ENCODE measurements at regions of chr12 and their contacts with region 1.

Region 1: GRCh38 chr12:52032804-52033502 is 18.3 kb upstream of the NR4A1 start:
- DNase-seq: peak; percentile 99
- ATAC-seq: peak; percentile 95
- H3K4me3 ChIP-seq: peak overlapping the region in 1 of 2 donors; percentile 12
- H3K27ac ChIP-seq: peak overlapping the region; percentile 80 to 89
- H3K4me1 ChIP-seq: peaks cover 0 to 4% of the 10 kb centered on the region in 2 donors
- H3K27me3 ChIP-seq: no peaks in the 10 kb centered on the region

Region 2: DNA sequence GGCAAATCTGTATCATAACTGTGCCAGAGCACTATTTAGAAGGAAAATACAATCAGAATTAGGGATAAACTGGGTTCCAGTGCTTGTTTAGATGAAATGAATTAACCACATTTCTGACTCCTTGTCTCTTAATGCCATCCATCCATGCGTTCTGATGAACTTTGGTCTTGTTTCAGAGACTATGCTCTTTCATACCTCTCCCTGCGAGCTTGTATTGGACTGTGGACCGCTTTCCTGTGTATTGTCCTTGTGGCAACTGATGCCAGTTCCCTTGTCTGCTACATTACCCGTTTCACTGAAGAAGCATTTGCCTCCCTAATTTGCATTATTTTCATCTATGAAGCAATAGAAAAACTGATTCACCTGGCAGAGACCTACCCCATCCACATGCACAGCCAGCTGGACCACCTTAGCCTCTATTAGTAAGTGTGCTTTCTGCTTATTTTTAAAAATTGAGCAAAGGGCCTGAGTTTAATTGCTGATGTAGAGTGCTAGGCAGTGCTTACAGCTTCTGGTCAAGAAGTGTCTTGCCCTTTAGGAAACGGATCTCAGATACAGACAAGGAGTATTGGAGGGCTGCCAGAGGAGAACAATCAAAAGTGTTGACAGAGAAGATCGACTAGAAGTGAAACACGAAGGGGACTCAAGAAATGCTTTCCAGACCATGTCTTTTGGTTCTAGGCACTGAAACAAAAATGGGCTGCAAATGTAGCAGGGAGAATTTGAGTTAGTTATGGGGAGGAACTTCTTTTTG is 561.7 kb before region 1 on chr12:
- intact Hi-C with region 1: no loop called
- DNase-seq: no peak
- ATAC-seq: no peak
- H3K4me3 ChIP-seq: no peak overlapping the region
- H3K27ac ChIP-seq: no peak overlapping the region
- H3K4me1 ChIP-seq: no peaks in the 10 kb centered on the region
- H3K27me3 ChIP-seq: no peaks in the 10 kb centered on the region

Region 3: DNA sequence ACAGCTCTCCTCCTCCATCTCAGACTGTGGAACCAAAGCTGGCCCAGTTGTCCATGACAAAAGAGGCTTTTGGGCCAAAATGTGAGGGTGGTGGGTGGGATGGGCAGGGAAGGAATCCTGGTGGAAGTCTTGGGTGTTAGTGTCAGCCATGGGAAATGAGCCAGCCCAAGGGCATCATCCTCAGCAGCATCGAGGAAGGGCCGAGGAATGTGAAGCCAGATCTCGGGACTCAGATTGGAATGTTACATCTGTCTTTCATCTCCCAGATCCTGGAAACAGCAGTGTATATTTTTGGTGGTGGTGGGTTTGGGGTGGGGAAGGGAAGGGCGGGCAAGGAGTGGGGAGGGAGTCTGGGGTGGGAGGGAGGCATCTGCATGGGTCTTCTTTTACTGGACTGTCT is 38.0 kb before region 1 on chr12:
- intact Hi-C with region 1: no loop called
- DNase-seq: no peak
- ATAC-seq: no peak
- H3K4me3 ChIP-seq: no peak overlapping the region
- H3K27ac ChIP-seq: no peak overlapping the region
- H3K4me1 ChIP-seq: no peaks in the 10 kb centered on the region
- H3K27me3 ChIP-seq: no peaks in the 10 kb centered on the region

Region 4: DNA sequence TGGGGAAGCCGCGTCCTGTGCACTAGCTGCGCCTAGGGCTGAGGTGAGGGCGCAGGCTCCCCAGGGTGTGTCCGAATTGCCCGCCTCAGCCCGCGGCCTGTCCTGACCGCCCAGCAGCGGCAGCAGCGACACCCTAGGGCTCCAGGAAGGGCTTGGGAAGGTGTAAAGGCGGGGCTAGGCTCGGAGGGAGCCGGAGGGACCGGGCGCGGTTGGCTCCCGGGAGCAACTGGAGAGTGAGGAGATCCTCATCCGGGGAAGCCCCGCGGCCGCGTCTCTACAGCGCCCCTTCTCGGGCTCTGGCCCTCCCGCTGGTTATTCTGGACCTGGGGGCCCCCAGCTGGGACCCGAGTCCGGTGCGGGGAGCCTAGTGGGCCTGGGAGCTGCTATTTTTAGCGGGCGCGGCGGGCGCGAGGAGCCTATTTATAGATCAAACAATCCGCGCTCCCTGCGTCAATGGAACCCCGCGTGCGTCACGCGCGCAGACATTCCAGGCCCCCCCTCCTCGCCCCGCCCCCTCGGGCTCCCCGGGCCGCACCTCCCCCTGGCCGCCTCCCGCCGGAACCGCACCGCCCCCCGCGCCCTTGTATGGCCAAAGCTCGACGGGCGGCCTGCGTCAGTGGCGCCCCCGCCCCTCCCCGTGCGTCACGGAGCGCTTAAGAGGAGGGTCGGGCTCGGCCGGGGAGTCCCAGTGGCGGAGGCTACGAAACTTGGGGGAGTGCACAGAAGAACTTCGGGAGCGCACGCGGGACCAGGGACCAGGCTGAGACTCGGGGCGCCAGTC is 18.0 kb after region 1 on chr12 and contains the start of gene NR4A1:
- intact Hi-C with region 1: loop called in 1 of 2 experiments (anchors 2 kb)
- DNase-seq: peak; percentile 99
- ATAC-seq: peak; percentile 93
- H3K4me3 ChIP-seq: peak within 1 kb of the TSS; percentile 35 to 49
- H3K27ac ChIP-seq: peak within 1 kb of the TSS; percentile 93 to 97
- H3K4me1 ChIP-seq: no peaks in the 10 kb centered on the region
- H3K27me3 ChIP-seq: no peaks in the 10 kb centered on the region
- total RNA-seq, gene NR4A1: 175 to 677 TPM

Region 5: GRCh38 chr12:52069327-52070184 is 36.6 kb after region 1 on chr12 and contains the start of gene ATG101:
- intact Hi-C with region 1: loop called in 1 of 2 experiments (anchors 2 kb)
- DNase-seq: peak; percentile 95
- ATAC-seq: peak; percentile 98
- H3K4me3 ChIP-seq: peak within 1 kb of the TSS; percentile 46 to 82
- H3K27ac ChIP-seq: peak within 1 kb of the TSS in 1 of 2 donors; percentile 80
- H3K4me1 ChIP-seq: peaks cover 2 to 4% of the 10 kb centered on the region in 2 donors
- H3K27me3 ChIP-seq: no peaks in the 10 kb centered on the region
- total RNA-seq, gene ATG101: 28.2 to 32.2 TPM

Region 6: GRCh38 chr12:52082988-52083637 is 50.2 kb after region 1 on chr12:
- intact Hi-C with region 1: loop called in 1 of 2 experiments (anchors 1 kb)
- DNase-seq: peak in 1 of 2 donors; percentile 88
- ATAC-seq: peak; percentile 79
- H3K4me3 ChIP-seq: no peak overlapping the region
- H3K27ac ChIP-seq: no peak overlapping the region
- H3K4me1 ChIP-seq: no peaks in the 10 kb centered on the region
- H3K27me3 ChIP-seq: no peaks in the 10 kb centered on the region

Region 7: GRCh38 chr12:54005853-54006686 is 1973.1 kb after region 1 on chr12:
- intact Hi-C with region 1: no loop called
- DNase-seq: peak; percentile 89 to 98
- ATAC-seq: peak; percentile 92
- H3K4me3 ChIP-seq: no peak overlapping the region
- H3K27ac ChIP-seq: no peak overlapping the region
- H3K4me1 ChIP-seq: no peaks in the 10 kb centered on the region
- H3K27me3 ChIP-seq: no peaks in the 10 kb centered on the region

Measured in aorta (tissue), 5 donors.